PC-9 (cell line): ENCODE measurements at regions of chr6 and their contacts with region 1.

Region 1: GRCh38 chr6:14017626-14018475 is 93.1 kb downstream of the RNF182 start:
- DNase-seq: no peak
- H3K4me3 ChIP-seq: no peak overlapping the region
- H3K27ac ChIP-seq: no peak overlapping the region
- H3K4me1 ChIP-seq: no peaks in the 10 kb centered on the region
- H3K27me3 ChIP-seq: no peaks in the 10 kb centered on the region
- CTCF ChIP-seq: no peak

Region 2: GRCh38 chr6:12973386-12973785 is 1044.5 kb before region 1 on chr6:
- CTCF ChIA-PET with region 1: no interaction called
- POLR2A ChIA-PET with region 1: no interaction called
- intact Hi-C with region 1: no loop called
- DNase-seq: no peak
- H3K4me3 ChIP-seq: no peak overlapping the region
- H3K27ac ChIP-seq: no peak overlapping the region
- H3K4me1 ChIP-seq: no peaks in the 10 kb centered on the region
- H3K27me3 ChIP-seq: peaks cover 35% of the 10 kb centered on the region
- CTCF ChIP-seq: no peak

Region 3: DNA sequence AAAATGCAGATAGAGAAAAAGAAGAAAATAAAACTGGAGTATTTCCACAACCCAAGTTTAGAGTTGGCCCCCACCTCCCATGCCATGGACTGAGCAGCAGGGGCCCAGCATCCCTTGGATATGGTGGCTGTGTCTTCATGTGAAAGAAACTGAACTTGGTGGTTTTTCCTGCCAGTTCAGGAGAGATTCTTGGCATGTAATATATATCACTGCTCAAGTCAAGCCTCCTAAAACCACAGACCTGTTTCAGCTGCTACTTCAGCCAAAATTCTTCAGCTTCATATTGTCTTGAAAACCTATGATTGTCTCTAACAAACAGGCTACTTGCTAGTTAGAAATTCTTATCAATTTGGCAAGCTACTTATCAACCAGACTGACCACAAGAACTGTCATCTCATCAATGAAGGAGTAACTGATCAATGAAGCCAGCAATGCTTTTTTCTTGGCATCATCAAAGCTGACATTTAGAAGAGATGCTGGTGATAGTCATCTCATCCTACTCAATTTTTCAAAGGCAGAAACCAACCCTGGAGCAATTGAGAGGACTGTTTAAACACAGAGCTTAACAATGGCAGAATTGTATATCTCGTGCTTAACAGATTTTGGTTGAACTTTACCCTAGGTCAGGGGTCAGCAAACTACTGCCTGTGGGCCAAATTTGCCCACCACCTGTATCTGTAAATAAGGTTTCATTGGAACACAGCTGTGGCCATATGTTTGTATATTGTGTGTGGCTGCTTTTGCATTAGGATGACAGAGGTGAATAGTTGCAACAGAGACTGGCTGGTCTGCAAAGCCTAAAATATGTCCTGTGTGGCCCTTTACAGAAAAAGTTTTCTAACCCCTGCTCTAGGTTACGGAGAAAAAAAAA is 413.1 kb before region 1 on chr6:
- CTCF ChIA-PET with region 1: no interaction called
- POLR2A ChIA-PET with region 1: interaction called, 13 read pairs
- intact Hi-C with region 1: no loop called
- DNase-seq: no peak
- H3K4me3 ChIP-seq: no peak overlapping the region
- H3K27ac ChIP-seq: no peak overlapping the region
- H3K4me1 ChIP-seq: no peaks in the 10 kb centered on the region
- H3K27me3 ChIP-seq: no peaks in the 10 kb centered on the region
- CTCF ChIP-seq: no peak